ENCODE measurements at regions of chr12 and their contacts with region 1.

Region 1: GRCh38 chr12:62934799-62935674 is at the start of gene PPM1H:
- DNase-seq: peak; percentile 62 to 88 (median 88)
- ATAC-seq: peak; percentile 83 to 88
- H3K4me3 ChIP-seq: peak within 1 kb of the TSS; percentile 72
- H3K27ac ChIP-seq: peak within 1 kb of the TSS; percentile 4
- H3K4me1 ChIP-seq: no peaks in the 10 kb centered on the region
- H3K27me3 ChIP-seq: no peaks in the 10 kb centered on the region
- total RNA-seq, gene PPM1H: 3.2 to 4.4 (median 3.6) TPM

Region 2: DNA sequence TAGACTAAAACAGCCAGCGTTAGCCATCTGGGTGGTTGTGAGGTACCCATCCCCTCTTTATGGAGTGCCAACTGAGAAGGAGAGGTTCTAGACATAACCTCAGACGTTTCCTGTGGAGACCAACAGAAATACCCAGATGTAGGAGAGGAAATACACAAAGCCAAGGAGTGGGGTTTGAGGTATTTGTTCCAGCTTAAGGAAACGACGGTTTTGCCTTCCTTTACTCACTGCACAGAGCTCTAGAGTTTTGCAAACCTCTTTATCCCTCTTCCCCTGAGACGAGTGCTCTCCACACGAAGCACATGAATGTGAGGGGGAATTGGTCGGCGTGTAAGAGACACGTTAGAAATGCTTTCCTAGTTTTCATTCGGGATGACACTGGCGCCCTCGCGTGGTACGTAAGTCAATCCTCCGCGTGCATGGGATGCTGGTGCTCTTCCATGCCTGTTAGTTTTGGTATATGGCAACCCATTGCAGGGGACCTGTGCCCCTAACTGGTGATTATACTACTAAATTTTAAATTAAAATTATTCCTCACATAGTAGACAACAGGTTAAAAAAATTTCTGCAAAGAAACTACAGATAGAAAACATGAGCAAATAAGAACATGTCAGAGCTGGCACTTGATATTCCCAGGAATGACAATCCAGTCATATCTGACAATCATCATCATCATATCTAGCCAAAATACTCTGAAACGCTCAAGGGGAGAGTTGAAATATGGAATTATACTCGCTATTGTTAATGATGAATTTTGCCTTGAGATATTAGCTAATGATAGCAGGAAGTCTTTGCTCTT is 121.8 kb before region 1 on chr12:
- intact Hi-C with region 1: loop called in 2 of 4 experiments (anchors 10 kb)
- DNase-seq: peak; percentile 74 to 87 (median 75)
- ATAC-seq: peak; percentile 67 to 73
- H3K4me3 ChIP-seq: no peak overlapping the region
- H3K27ac ChIP-seq: no peak overlapping the region
- H3K4me1 ChIP-seq: no peaks in the 10 kb centered on the region
- H3K27me3 ChIP-seq: no peaks in the 10 kb centered on the region

Region 3: GRCh38 chr12:62866451-62867082 is 68.5 kb before region 1 on chr12:
- intact Hi-C with region 1: loop called in 1 of 4 experiments (anchors 5 kb)
- DNase-seq: no peak
- ATAC-seq: peak; percentile 67 to 78
- H3K4me3 ChIP-seq: no peak overlapping the region
- H3K27ac ChIP-seq: no peak overlapping the region
- H3K4me1 ChIP-seq: peaks cover 6% of the 10 kb centered on the region
- H3K27me3 ChIP-seq: no peaks in the 10 kb centered on the region

Region 4: DNA sequence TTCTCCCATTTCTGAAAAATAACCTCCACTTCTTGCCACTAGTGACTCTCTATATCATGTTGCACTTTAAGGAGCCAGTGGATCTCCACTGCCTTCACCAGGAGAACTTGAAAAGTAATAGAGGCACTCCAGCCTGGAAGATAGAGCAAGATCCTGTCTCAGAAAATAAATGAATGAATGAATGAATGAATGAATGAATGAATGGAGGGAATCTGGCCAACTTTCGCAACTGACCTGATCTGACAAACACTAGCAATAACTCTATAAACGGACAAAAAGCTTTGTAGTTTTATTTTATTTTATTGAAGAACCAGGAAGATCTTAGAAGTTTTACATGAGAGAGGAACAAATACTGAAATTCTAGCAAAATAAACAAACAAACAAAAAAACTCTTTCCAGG is 325.7 kb after region 1 on chr12:
- intact Hi-C with region 1: no loop called
- DNase-seq: no peak
- ATAC-seq: no peak
- H3K4me3 ChIP-seq: no peak overlapping the region
- H3K27ac ChIP-seq: no peak overlapping the region
- H3K4me1 ChIP-seq: no peaks in the 10 kb centered on the region
- H3K27me3 ChIP-seq: no peaks in the 10 kb centered on the region